Naive thymus-derived CD8-positive, alpha-beta T cell (primary cell): ENCODE measurements at regions of chr5 and their contacts with region 1.

Region 1: DNA sequence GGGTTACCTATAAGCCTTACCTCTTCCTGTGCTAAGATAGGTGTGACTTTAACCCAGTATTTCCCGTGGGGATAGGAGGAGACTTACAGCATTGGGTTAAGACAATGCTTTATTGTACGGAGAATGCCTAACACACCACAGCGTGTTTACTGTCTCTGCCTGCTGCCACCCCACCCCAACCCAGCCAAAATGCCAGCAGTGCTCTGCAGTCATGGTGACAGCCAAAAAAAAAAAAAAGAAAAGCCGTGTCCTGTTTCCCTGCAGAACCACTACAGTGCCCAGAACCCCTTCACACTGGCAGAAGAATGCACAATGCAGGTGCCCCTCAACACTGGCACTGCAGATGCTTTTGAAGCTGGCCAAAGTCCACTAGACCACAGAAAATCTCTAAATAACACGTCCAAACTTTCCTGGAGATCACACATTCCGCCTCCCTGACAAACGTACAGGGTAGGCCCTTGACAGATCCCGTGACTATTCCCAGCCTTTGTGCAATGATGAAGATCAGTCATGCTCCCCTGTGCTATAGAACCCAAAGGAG is 102.2 kb downstream of the SERINC5 start:
- DNase-seq: peak in 7 of 10 donors; percentile 23 to 77 (median 73)
- ATAC-seq: peak; percentile 65 to 71
- H3K4me3 Mint-ChIP-seq: peak overlapping the region in 9 of 10 donors; percentile 28 to 87 (median 79)
- H3K27ac Mint-ChIP-seq: peak overlapping the region; percentile 94 to 100 (median 98)
- H3K4me1 Mint-ChIP-seq: peaks cover 24 to 95% (median 71%) of the 10 kb centered on the region in 4 donors
- H3K27me3 Mint-ChIP-seq: no peaks in the 10 kb centered on the region

Region 2: DNA sequence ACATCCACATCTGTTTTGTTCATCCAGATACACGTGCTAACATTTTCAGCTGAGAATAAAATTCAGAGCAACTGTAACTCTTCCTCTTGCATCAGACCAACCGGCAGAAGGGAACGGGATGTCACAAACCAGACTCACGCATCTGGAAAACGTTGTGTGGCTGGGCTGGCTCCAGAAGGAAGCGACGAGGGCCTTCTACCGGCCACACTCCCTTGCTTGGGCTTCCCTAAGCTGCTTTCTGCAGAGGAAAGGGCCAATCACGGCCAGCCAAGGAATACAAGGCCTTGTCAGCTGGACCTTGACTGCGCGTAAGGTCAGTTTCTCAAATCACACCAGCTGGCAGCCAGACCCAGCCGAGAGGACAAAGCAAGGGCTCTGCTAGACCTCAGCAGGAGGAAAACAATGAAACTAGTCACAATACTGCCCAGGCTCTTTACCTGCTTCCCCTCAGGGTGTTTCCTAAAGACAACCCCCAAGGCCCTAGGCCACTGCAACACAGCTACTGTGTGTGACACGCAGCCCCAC is 12.4 kb before region 1 on chr5:
- POLR2A ChIA-PET with region 1: interaction called, 128 read pairs
- DNase-seq: no peak
- ATAC-seq: no peak
- H3K4me3 Mint-ChIP-seq: peak overlapping the region in 8 of 10 donors; percentile 22 to 78 (median 63)
- H3K27ac Mint-ChIP-seq: peak overlapping the region; percentile 87 to 97 (median 90)
- H3K4me1 Mint-ChIP-seq: peaks cover 38 to 92% (median 82%) of the 10 kb centered on the region in 4 donors
- H3K27me3 Mint-ChIP-seq: no peaks in the 10 kb centered on the region

Region 3: DNA sequence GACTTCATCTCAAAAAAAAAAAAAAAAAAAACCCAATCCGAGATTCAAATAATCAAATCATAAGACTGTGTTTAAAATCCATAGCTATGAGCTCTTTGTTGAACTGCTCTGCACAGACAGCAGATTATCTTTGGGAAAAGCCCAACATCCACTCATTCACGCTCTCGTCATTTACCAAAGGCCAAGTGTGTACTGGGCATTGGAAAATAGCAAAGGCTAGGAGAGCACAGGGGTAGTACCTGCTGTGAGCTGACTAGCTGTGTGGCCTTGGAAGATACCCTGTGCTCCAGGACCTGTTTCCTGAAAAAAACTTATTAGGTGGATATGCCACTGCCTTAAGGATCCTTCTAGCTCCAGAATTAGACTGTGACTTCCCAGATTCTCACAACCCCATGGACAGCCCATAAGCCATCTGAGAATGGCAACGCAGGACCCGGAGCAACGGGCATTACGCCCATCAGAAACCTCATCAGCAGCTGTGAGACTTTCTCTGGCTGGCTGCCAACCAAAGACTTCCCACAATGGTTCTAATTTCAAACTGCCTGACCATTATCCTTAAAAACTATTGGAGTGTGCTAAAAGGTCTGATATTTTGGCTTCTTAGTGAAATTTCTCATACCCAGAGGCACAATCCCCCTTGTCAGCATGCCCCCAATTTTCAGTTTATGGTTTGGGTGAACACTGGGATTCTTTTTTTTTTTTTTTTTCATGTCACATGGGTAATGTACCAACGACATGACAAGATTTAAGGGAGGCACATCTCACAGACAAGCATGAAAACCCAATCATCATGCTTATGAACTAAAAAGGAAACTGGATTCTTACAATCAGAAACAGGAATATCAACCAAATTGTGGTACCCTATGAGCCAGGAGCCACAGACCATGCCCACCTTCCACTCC is 85.4 kb after region 1 on chr5:
- POLR2A ChIA-PET with region 1: interaction called, 12 read pairs
- DNase-seq: peak in 1 of 10 donors; percentile 26
- ATAC-seq: peak; percentile 9 to 30
- H3K4me3 Mint-ChIP-seq: peak overlapping the region; percentile 23 to 85 (median 64)
- H3K27ac Mint-ChIP-seq: peak overlapping the region; percentile 68 to 94 (median 86)
- H3K4me1 Mint-ChIP-seq: peaks cover 39 to 82% (median 75%) of the 10 kb centered on the region in 4 donors
- H3K27me3 Mint-ChIP-seq: no peaks in the 10 kb centered on the region